Motor neuron (in vitro differentiated cells): ENCODE measurements at regions of chr9 and their contacts with region 1.

Region 1: DNA sequence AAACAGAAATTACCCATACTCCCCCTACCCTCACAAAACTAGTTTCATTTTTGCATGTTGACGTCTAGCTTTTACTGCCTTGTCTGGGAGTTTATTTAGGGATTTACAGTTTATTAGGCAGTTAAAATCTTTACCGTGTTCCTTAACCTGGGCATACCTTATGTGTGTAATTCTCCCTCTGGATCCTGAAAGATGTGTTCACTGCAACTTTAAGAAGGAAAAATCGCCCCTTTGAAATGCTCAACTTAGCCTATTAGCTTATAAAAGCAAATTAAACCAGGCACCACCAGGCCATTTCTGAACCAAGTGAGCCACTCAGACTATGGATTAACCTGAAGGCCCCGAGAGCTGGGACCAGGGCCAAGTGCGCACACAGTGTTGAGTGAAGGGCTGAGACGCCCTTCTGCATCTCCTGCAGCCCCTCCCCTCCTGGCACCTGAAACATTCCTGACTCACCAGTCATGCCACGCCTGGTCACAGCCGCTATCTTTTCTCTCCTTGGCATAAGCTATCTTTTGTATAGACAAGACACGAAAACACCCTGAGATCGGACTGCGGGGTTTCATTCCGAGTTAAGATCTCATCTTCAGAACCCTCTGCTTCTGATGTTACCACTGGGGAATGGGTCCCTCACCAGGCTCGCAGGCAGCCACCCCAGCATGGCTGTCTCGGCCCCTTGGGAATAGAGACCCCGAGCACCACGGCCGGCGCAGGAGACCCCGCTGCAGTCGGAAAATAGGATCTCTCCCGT is 111.9 kb downstream of the ROR2 start:
- ATAC-seq: peak in 6 of 8 experiments; percentile 27 to 85 (median 62)
- H3K4me3 ChIP-seq: no peak overlapping the region
- H3K27ac ChIP-seq: no peak overlapping the region
- H3K4me1 ChIP-seq: peaks cover 46 to 52% of the 10 kb centered on the region in 2 donors

Region 2: DNA sequence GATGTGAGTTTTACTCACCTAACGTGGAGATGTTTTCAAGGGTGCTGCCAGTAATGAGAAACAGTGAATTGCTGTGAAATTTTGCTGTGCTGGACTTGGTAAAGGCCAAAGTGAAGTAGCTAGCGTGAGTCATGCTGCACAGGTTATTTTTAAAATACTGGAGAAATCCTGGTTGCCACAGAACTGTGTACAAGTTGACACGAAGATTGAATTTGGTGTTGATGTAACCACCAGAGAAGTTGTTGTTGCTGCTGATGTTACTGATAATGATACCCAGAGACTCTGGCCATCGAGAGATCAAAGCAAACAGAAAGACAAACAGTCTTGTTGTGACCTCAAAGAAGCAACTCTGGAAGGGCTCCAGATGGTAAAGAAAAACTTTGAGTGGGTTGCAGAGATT is 226.5 kb before region 1 on chr9:
- in situ Hi-C with region 1: no loop called
- ATAC-seq: no peak
- H3K4me3 ChIP-seq: no peak overlapping the region
- H3K27ac ChIP-seq: no peak overlapping the region
- H3K4me1 ChIP-seq: no peaks in the 10 kb centered on the region

Region 3: DNA sequence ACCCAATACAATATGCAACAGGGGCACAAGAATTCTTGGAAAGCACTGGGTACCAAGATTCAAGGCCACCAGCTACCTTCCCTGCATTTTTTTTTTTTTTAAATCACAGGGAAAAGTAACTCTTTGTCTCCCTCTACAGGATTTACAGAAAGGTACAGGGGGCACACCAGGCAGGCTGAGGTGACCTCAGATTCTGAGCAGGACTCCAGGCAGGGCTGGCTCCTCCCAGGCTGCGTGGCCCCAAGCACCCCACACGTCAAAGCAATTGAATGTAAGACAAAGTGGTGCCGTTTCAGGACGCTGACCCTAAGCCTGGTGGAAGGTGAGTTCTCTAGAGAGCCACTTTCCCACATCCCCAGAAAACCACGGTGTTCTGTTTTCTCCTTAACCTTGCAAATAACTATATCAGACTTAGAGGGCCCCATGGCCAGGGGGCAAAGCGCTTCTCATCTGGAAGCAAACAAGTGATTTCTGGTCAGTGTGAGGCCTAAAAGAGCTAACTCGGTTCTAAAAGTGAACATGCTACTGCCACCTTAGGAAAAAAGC is 110.8 kb before region 1 on chr9:
- in situ Hi-C with region 1: loop called in 1 of 9 experiments (anchors 25 kb)
- ATAC-seq: peak; percentile 87 to 95 (median 90)
- H3K4me3 ChIP-seq: no peak overlapping the region
- H3K27ac ChIP-seq: no peak overlapping the region
- H3K4me1 ChIP-seq: no peaks in the 10 kb centered on the region